H1 (cell line): ENCODE measurements at regions of chr12 and their contacts with region 1.

Region 1: GRCh38 chr12:125284949-125285685 is 219.9 kb downstream of the AACS start:
- DNase-seq: no peak
- H3K4me3 ChIP-seq: no peak overlapping the region
- H3K27ac ChIP-seq: no peak overlapping the region
- H3K4me1 ChIP-seq: peaks cover 11 to 16% (median 14%) of the 10 kb centered on the region in 4 experiments
- H3K27me3 ChIP-seq: no peaks in the 10 kb centered on the region
- CTCF ChIP-seq: no peak
- EP300 ChIP-seq: no peak
- POLR2A ChIP-seq: no peak
- RAD21 ChIP-seq: no peak

Region 2: DNA sequence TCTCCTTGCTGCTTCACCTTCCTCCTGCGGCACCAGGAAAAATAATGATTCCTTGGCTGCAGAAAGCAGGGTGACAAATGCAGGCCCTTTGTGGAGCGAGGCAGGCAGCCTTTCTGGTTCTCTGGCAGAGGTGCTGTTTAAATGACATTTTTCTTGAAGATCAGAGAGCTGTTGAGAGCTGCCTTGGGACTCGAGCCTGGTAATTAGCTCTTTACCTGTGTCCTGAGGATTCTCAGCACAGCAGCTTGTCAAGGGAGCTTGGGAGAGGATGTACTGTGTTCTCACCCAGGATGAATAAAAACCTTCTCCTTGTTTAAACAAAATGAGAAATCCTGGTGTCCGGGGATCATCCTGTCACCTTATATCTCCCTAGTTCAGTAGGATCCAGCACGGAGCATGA is 15.8 kb before region 1 on chr12:
- CTCF ChIA-PET with region 1: interaction called, 10 read pairs
- POLR2A ChIA-PET with region 1: interaction called, 7 read pairs
- DNase-seq: no peak
- H3K4me3 ChIP-seq: no peak overlapping the region
- H3K27ac ChIP-seq: no peak overlapping the region
- H3K4me1 ChIP-seq: peaks cover 0 to 6% (median 2%) of the 10 kb centered on the region in 4 experiments; a peak in 3 of 7 replicates
- H3K27me3 ChIP-seq: no peaks in the 10 kb centered on the region
- CTCF ChIP-seq: no peak
- EP300 ChIP-seq: no peak
- POLR2A ChIP-seq: no peak
- RAD21 ChIP-seq: no peak